Natural killer cell (primary cell): ENCODE measurements at regions of chr12 and their contacts with region 1.

Region 1: DNA sequence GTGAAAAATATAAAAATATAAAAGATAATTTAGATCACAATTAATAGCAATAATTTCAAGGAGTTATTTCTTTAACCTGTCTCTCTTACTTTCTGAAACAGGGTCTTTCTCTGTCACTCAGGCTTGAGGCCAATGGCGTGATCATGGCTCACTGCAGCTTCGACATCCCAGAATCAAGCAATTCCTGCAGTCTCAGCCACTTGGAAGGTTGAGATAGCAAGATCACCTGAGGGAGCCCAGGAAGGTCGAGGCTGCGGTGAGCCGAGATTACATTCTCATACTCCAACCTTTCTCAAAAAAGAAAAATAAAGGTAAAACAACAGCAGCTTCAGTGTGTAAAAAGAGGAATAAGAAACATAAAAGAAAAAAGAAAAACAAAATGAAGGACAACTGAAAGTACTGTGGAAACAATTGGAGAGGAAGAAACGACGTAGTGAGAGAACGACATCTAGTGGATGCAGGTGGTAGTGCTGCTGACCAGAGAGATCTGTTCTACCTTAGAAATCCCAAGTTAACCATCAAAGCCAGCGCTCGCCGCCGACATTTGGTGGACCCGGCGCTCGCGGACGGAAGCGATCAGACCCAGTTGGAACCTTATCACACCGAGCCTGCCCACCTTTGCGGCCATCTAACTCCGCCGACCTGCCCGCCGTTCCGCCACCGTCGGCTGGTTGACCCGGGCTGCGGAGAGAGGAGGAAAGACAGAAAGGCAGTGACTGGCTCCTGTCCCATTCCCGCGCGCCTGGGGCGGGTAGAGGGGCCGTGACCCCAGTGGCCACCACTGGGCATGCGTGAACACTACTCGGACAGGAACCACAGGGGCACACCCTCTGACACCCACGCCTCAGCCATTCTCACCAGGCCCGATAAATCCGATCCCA is 196.1 kb downstream of the ALG10 start:
- DNase-seq: peak; percentile 47 to 81
- ATAC-seq: peak; percentile 76 to 91 (median 90)
- H3K4me3 ChIP-seq: peak overlapping the region; percentile 56
- H3K4me3 Mint-ChIP-seq: peak overlapping the region; percentile 85
- H3K27ac ChIP-seq: peak overlapping the region; percentile 31
- H3K27ac Mint-ChIP-seq: peak overlapping the region; percentile 14 to 80
- H3K4me1 ChIP-seq: peaks cover 14% of the 10 kb centered on the region
- H3K4me1 Mint-ChIP-seq: peaks cover 7 to 11% of the 10 kb centered on the region in 2 donors
- H3K27me3 ChIP-seq: no peaks in the 10 kb centered on the region
- H3K27me3 Mint-ChIP-seq: peaks cover 0 to 3% of the 10 kb centered on the region in 2 donors
- CTCF ChIP-seq: peak; percentile 94

Region 2: GRCh38 chr12:32755654-32756475 is 1462.5 kb before region 1 on chr12 and contains the start of gene YARS2:
- intact Hi-C with region 1: loop called (anchors 1 kb)
- DNase-seq: peak; percentile 69 to 97
- ATAC-seq: peak; percentile 77 to 85 (median 80)
- H3K4me3 ChIP-seq: peak within 1 kb of the TSS; percentile 85
- H3K4me3 Mint-ChIP-seq: peak within 1 kb of the TSS; percentile 89
- H3K27ac ChIP-seq: peak within 1 kb of the TSS; percentile 82
- H3K27ac Mint-ChIP-seq: peak within 1 kb of the TSS; percentile 85 to 88
- H3K4me1 ChIP-seq: peaks cover 14% of the 10 kb centered on the region
- H3K4me1 Mint-ChIP-seq: peaks cover 16 to 17% of the 10 kb centered on the region in 2 donors
- H3K27me3 ChIP-seq: no peaks in the 10 kb centered on the region
- H3K27me3 Mint-ChIP-seq: peaks cover 0 to 6% of the 10 kb centered on the region in 2 donors
- CTCF ChIP-seq: peak; percentile 79
- total RNA-seq, gene YARS2: 9.2 to 15.9 (median 9.3) TPM

Region 3: GRCh38 chr12:34033628-34034282 is 184.7 kb before region 1 on chr12:
- intact Hi-C with region 1: loop called (anchors 10 kb)
- DNase-seq: peak in 1 of 2 donors; percentile 65
- ATAC-seq: peak in 1 of 3 donors; percentile 50
- H3K4me3 ChIP-seq: no peak overlapping the region
- H3K4me3 Mint-ChIP-seq: no peak overlapping the region
- H3K27ac ChIP-seq: no peak overlapping the region
- H3K27ac Mint-ChIP-seq: no peak overlapping the region
- H3K4me1 ChIP-seq: no peaks in the 10 kb centered on the region
- H3K4me1 Mint-ChIP-seq: no peaks in the 10 kb centered on the region
- H3K27me3 ChIP-seq: no peaks in the 10 kb centered on the region
- H3K27me3 Mint-ChIP-seq: no peaks in the 10 kb centered on the region
- CTCF ChIP-seq: peak; percentile 77

Region 4: DNA sequence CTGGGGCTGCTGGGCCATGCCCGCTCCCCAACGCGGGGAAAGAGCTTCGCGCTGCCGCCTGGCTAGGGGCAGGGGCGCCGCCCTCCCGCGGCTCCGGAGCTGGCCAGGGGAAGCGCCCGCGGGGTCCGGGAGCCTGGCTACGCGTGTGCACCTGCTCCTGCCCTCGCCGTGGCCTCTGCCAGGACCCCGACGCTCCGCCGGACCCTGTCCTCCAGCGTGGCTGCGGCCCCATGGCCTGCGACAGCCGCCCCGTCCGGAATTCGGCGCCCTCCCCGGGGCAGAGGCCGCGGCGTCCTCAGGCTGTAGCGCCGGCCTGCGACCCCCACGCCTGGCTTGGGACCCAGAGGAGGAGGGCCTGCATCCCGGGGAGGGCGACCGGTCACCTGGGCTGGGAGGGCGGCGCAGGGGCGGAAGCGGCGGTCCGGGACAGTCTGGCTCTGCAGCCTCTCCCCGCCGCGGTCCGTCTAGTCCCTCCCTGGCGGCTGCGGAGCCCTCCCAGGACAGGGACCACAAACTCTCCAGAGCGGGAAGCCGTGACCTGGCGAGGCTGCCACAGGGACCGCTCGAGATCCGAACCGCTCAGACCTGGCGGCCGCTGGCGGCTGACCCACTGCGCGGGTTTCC is 110.5 kb before region 1 on chr12:
- intact Hi-C with region 1: no loop called
- DNase-seq: no peak
- ATAC-seq: no peak
- H3K4me3 ChIP-seq: no peak overlapping the region
- H3K4me3 Mint-ChIP-seq: no peak overlapping the region
- H3K27ac ChIP-seq: no peak overlapping the region
- H3K27ac Mint-ChIP-seq: no peak overlapping the region
- H3K4me1 ChIP-seq: no peaks in the 10 kb centered on the region
- H3K4me1 Mint-ChIP-seq: no peaks in the 10 kb centered on the region
- H3K27me3 ChIP-seq: peaks cover 6% of the 10 kb centered on the region
- H3K27me3 Mint-ChIP-seq: peaks cover 1 to 15% of the 10 kb centered on the region in 2 donors
- CTCF ChIP-seq: no peak

Region 5: GRCh38 chr12:34126239-34126641 is 92.2 kb before region 1 on chr12:
- intact Hi-C with region 1: loop called (anchors 1 kb)
- DNase-seq: peak in 1 of 2 donors; percentile 32
- ATAC-seq: peak; percentile 30 to 63 (median 44)
- H3K4me3 ChIP-seq: peak overlapping the region; percentile 27
- H3K4me3 Mint-ChIP-seq: peak overlapping the region; percentile 90
- H3K27ac ChIP-seq: peak overlapping the region; percentile 2
- H3K27ac Mint-ChIP-seq: peak overlapping the region; percentile 43 to 77
- H3K4me1 ChIP-seq: peaks cover 12% of the 10 kb centered on the region
- H3K4me1 Mint-ChIP-seq: peaks cover 9 to 22% of the 10 kb centered on the region in 2 donors
- H3K27me3 ChIP-seq: no peaks in the 10 kb centered on the region
- H3K27me3 Mint-ChIP-seq: peaks cover 3 to 10% of the 10 kb centered on the region in 2 donors
- CTCF ChIP-seq: no peak

Region 6: GRCh38 chr12:34296143-34297041 is 78.0 kb after region 1 on chr12:
- intact Hi-C with region 1: no loop called
- DNase-seq: no peak
- ATAC-seq: no peak
- H3K4me3 ChIP-seq: no peak overlapping the region
- H3K4me3 Mint-ChIP-seq: no peak overlapping the region
- H3K27ac ChIP-seq: no peak overlapping the region
- H3K27ac Mint-ChIP-seq: no peak overlapping the region
- H3K4me1 ChIP-seq: no peaks in the 10 kb centered on the region
- H3K4me1 Mint-ChIP-seq: no peaks in the 10 kb centered on the region
- H3K27me3 ChIP-seq: no peaks in the 10 kb centered on the region
- H3K27me3 Mint-ChIP-seq: no peaks in the 10 kb centered on the region
- CTCF ChIP-seq: no peak